CD4-positive, alpha-beta T cell (primary cell): ENCODE measurements at regions of chr1 and their contacts with region 1.

Region 1: GRCh38 chr1:166910396-166910994 is 34.4 kb upstream of the TADA1 start:
- DNase-seq: peak; percentile 54 to 92 (median 68)
- ATAC-seq: peak; percentile 100
- H3K4me3 ChIP-seq: no peak overlapping the region
- H3K4me3 Mint-ChIP-seq: no peak overlapping the region
- H3K27ac ChIP-seq: no peak overlapping the region
- H3K27ac Mint-ChIP-seq: no peak overlapping the region
- H3K4me1 ChIP-seq: peaks cover 3% of the 10 kb centered on the region
- H3K4me1 Mint-ChIP-seq: no peaks in the 10 kb centered on the region
- H3K27me3 ChIP-seq: no peaks in the 10 kb centered on the region
- H3K27me3 Mint-ChIP-seq: no peaks in the 10 kb centered on the region
- CTCF ChIP-seq: peak; percentile 81

Region 2: DNA sequence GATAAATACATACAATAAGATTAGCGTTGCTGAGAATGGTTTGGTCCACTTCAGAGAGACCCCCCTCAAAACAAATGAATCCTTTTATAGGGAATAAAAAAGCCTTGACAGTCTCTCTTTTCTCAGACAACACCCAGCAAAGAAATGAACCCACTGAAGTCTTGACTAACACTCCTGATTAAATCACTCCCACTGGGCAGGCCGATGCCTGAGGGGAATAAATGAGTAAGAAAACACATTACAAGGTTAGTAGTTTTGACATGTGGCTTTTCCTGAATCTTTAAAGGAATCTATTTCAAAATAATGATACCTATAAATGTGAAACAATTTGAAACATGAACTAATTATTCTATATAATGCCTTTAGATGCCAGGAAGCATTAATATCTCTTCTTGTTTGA is 218.1 kb before region 1 on chr1:
- CTCF ChIA-PET with region 1: no interaction called
- POLR2A ChIA-PET with region 1: no interaction called
- intact Hi-C with region 1: no loop called
- DNase-seq: no peak
- ATAC-seq: no peak
- H3K4me3 ChIP-seq: no peak overlapping the region
- H3K4me3 Mint-ChIP-seq: no peak overlapping the region
- H3K27ac ChIP-seq: no peak overlapping the region
- H3K27ac Mint-ChIP-seq: no peak overlapping the region
- H3K4me1 ChIP-seq: no peaks in the 10 kb centered on the region
- H3K4me1 Mint-ChIP-seq: no peaks in the 10 kb centered on the region
- H3K27me3 ChIP-seq: peaks cover 7 to 13% of the 10 kb centered on the region in 2 experiments
- H3K27me3 Mint-ChIP-seq: peaks cover 64% of the 10 kb centered on the region
- CTCF ChIP-seq: no peak

Region 3: GRCh38 chr1:166875734-166876539 is 34.6 kb before region 1 on chr1 and contains the start of gene TADA1:
- CTCF ChIA-PET with region 1: interaction called, 14 read pairs
- POLR2A ChIA-PET with region 1: interaction called, 3 read pairs
- intact Hi-C with region 1: no loop called
- DNase-seq: peak; percentile 94 to 99 (median 98)
- ATAC-seq: peak; percentile 89
- H3K4me3 ChIP-seq: peak within 1 kb of the TSS; percentile 75
- H3K4me3 Mint-ChIP-seq: peak within 1 kb of the TSS; percentile 92
- H3K27ac ChIP-seq: peak within 1 kb of the TSS; percentile 52 to 73
- H3K27ac Mint-ChIP-seq: peak within 1 kb of the TSS; percentile 88
- H3K4me1 ChIP-seq: peaks cover 27% of the 10 kb centered on the region
- H3K4me1 Mint-ChIP-seq: peaks cover 58% of the 10 kb centered on the region
- H3K27me3 ChIP-seq: no peaks in the 10 kb centered on the region
- H3K27me3 Mint-ChIP-seq: no peaks in the 10 kb centered on the region
- CTCF ChIP-seq: no peak
- total RNA-seq, gene TADA1: 15.8 to 16.4 TPM

Region 4: DNA sequence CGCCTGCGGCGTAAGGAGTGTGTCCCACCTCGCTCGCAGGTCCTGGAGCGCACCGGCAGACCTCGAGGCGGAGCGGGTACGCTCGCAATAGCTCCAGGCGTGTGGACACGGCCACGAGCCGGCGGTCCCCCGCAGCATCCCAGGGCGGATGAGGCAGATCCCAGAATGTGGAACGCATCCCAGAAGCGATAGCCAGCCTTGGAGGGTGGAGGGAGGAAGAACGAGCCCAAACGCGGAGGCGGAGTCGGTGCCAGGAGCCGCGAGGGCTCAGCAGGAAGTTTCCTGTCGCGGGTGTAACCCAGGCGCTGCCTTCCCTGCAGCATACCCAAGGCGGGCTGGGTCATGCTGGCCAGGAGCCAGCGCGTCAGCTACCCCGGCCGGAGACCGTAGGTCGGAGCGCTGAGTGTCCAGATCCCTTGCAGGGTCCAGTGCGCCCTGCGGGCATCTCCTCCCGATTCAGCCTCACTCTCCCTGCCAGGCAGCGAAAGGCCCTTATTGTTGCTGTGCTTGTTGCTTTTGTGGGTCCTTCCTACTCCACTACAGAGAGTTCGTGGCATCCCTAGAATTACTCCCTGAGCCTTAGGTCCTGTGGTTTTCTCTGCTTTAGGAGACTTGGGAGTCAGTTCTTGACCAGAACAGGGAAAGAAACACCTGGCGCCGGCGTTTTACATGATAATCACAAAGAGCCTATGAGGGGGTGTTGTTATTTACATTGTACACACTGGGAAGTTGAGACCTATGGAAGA is 211.1 kb after region 1 on chr1:
- CTCF ChIA-PET with region 1: interaction called, 4 read pairs
- POLR2A ChIA-PET with region 1: no interaction called
- intact Hi-C with region 1: loop called in 1 of 2 experiments (anchors 2 kb)
- DNase-seq: peak in 13 of 14 experiments; percentile 10 to 65 (median 32)
- ATAC-seq: peak; percentile 74
- H3K4me3 ChIP-seq: peak overlapping the region; percentile 64
- H3K4me3 Mint-ChIP-seq: peak overlapping the region; percentile 87
- H3K27ac ChIP-seq: no peak overlapping the region
- H3K27ac Mint-ChIP-seq: no peak overlapping the region
- H3K4me1 ChIP-seq: peaks cover 12% of the 10 kb centered on the region
- H3K4me1 Mint-ChIP-seq: peaks cover 12% of the 10 kb centered on the region
- H3K27me3 ChIP-seq: no peaks in the 10 kb centered on the region
- H3K27me3 Mint-ChIP-seq: peaks cover 9% of the 10 kb centered on the region
- CTCF ChIP-seq: no peak

Region 5: DNA sequence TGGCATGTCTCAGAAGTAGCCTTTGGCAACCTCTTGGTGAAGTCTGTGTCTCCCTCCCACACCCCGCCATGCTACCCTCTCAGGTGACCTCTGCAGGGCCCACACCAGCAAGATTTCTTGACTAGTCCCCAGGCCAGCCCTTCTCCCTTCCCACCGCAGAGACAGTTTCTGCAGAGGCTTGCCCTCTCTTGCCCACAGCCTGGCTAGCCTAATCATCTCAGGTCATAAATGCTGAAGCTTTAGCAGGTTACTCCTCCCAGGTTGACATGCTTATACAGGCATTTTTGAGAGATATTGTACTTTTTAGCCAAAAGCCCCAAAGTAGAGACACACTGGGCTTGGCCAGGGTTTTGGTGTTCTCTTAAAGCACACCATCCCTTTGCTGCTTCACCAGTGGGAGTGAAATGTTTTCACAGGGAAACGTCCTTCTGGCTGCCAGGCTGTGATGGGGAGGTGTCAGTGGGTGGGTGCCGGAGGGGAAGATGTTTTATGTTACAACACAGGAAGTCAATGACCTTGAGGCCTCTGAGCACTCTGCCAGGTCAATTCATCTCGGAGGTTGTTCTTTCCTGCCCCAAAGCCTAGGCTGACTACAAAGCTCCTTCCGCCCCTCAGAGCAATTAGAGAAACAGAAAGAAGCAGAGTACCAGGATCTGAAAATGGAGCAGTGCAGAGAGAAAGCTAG is 241.8 kb after region 1 on chr1:
- CTCF ChIA-PET with region 1: no interaction called
- POLR2A ChIA-PET with region 1: no interaction called
- intact Hi-C with region 1: no loop called
- DNase-seq: no peak
- ATAC-seq: no peak
- H3K4me3 ChIP-seq: no peak overlapping the region
- H3K4me3 Mint-ChIP-seq: no peak overlapping the region
- H3K27ac ChIP-seq: no peak overlapping the region
- H3K27ac Mint-ChIP-seq: no peak overlapping the region
- H3K4me1 ChIP-seq: peaks cover 2% of the 10 kb centered on the region
- H3K4me1 Mint-ChIP-seq: no peaks in the 10 kb centered on the region
- H3K27me3 ChIP-seq: peaks cover 4 to 16% of the 10 kb centered on the region in 2 experiments
- H3K27me3 Mint-ChIP-seq: peaks cover 20% of the 10 kb centered on the region
- CTCF ChIP-seq: no peak

Region 6: GRCh38 chr1:167387251-167387910 is 476.9 kb after region 1 on chr1:
- CTCF ChIA-PET with region 1: interaction called, 3 read pairs
- POLR2A ChIA-PET with region 1: no interaction called
- intact Hi-C with region 1: loop called in 1 of 2 experiments (anchors 10 kb)
- DNase-seq: no peak
- ATAC-seq: no peak
- H3K4me3 ChIP-seq: no peak overlapping the region
- H3K4me3 Mint-ChIP-seq: no peak overlapping the region
- H3K27ac ChIP-seq: no peak overlapping the region
- H3K27ac Mint-ChIP-seq: no peak overlapping the region
- H3K4me1 ChIP-seq: no peaks in the 10 kb centered on the region
- H3K4me1 Mint-ChIP-seq: no peaks in the 10 kb centered on the region
- H3K27me3 ChIP-seq: no peaks in the 10 kb centered on the region
- H3K27me3 Mint-ChIP-seq: no peaks in the 10 kb centered on the region
- CTCF ChIP-seq: no peak

Region 7: GRCh38 chr1:167553136-167554027 is 642.9 kb after region 1 on chr1 and contains the start of gene CREG1:
- CTCF ChIA-PET with region 1: interaction called, 3 read pairs
- POLR2A ChIA-PET with region 1: interaction called, 3 read pairs
- intact Hi-C with region 1: loop called in 1 of 2 experiments (anchors 10 kb)
- DNase-seq: peak; percentile 76 to 95 (median 86)
- ATAC-seq: peak; percentile 97
- H3K4me3 ChIP-seq: peak within 1 kb of the TSS; percentile 75
- H3K4me3 Mint-ChIP-seq: peak within 1 kb of the TSS; percentile 96
- H3K27ac ChIP-seq: peak within 1 kb of the TSS in 1 of 2 donors; percentile 25
- H3K27ac Mint-ChIP-seq: peak within 1 kb of the TSS; percentile 81
- H3K4me1 ChIP-seq: peaks cover 25% of the 10 kb centered on the region
- H3K4me1 Mint-ChIP-seq: peaks cover 42% of the 10 kb centered on the region
- H3K27me3 ChIP-seq: no peaks in the 10 kb centered on the region
- H3K27me3 Mint-ChIP-seq: no peaks in the 10 kb centered on the region
- CTCF ChIP-seq: no peak
- total RNA-seq, gene CREG1: 10.7 to 11.2 TPM